ENCODE measurements at regions of chrX and their contacts with region 1.

Region 1: GRCh38 chrX:103464774-103465117 is 54.5 kb downstream of the RAB40A start:
- DNase-seq: peak; percentile 52
- H3K4me3 ChIP-seq: no peak overlapping the region
- H3K27ac ChIP-seq: no peak overlapping the region
- H3K27me3 ChIP-seq: no peaks in the 10 kb centered on the region
- CTCF ChIP-seq: peak; percentile 76

Region 2: GRCh38 chrX:103211012-103211715 is 253.6 kb before region 1 on chrX:
- CTCF ChIA-PET with region 1: interaction called, 26 read pairs
- POLR2A ChIA-PET with region 1: no interaction called
- DNase-seq: no peak
- H3K4me3 ChIP-seq: no peak overlapping the region
- H3K27ac ChIP-seq: no peak overlapping the region
- H3K27me3 ChIP-seq: peaks cover 5% of the 10 kb centered on the region
- CTCF ChIP-seq: peak; percentile 53

Region 3: DNA sequence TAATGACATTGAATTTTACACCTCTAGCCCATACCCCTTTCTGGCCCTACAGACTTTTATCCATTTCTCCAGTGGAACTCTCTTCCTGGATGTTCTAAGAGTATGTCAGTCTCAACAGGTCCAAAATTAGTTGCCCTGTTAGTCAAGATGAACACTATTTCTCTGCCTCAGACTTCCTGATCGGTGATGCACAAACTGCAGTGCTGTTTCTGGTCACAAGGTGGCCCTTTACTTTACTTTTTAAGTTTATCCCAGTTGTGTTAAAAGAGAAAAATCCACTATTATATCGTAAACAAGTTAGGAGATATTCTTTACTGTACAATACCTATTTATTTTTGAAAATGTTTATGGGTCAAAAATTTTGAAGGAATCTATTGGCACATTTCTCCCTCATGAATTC is 121.6 kb before region 1 on chrX:
- CTCF ChIA-PET with region 1: interaction called, 78 read pairs
- POLR2A ChIA-PET with region 1: no interaction called
- DNase-seq: no peak
- H3K4me3 ChIP-seq: no peak overlapping the region
- H3K27ac ChIP-seq: no peak overlapping the region
- H3K27me3 ChIP-seq: peaks cover 7% of the 10 kb centered on the region
- CTCF ChIP-seq: peak; percentile 72

Region 4: GRCh38 chrX:103356130-103356798 is 108.5 kb before region 1 on chrX and contains the start of gene TCEAL9:
- CTCF ChIA-PET with region 1: interaction called, 13 read pairs
- POLR2A ChIA-PET with region 1: no interaction called
- DNase-seq: peak; percentile 51
- H3K4me3 ChIP-seq: peak within 1 kb of the TSS; percentile 79
- H3K27ac ChIP-seq: peak within 1 kb of the TSS; percentile 81
- H3K27me3 ChIP-seq: no peaks in the 10 kb centered on the region
- CTCF ChIP-seq: no peak
- polyA plus RNA-seq, gene TCEAL9: 141 and 234 TPM in 2 replicates

Region 5: GRCh38 chrX:103453655-103454054 is 11.1 kb before region 1 on chrX:
- CTCF ChIA-PET with region 1: no interaction called
- POLR2A ChIA-PET with region 1: no interaction called
- DNase-seq: peak; percentile 80
- H3K4me3 ChIP-seq: no peak overlapping the region
- H3K27ac ChIP-seq: no peak overlapping the region
- H3K27me3 ChIP-seq: no peaks in the 10 kb centered on the region
- CTCF ChIP-seq: no peak